Activated CD4-positive, alpha-beta T cell treated with anti-CD3 and anti-CD28 coated beads for 36 hours (primary cell): ENCODE measurements at regions of chr16 and their contacts with region 1.

Region 1: GRCh38 chr16:55828680-55829079 is 4.2 kb downstream of the CES1 start:
- DNase-seq: no peak
- ATAC-seq: no peak
- H3K4me3 Mint-ChIP-seq: no peak overlapping the region
- H3K27ac Mint-ChIP-seq: no peak overlapping the region
- H3K4me1 Mint-ChIP-seq: no peaks in the 10 kb centered on the region
- H3K27me3 Mint-ChIP-seq: peaks cover 8% of the 10 kb centered on the region

Region 2: GRCh38 chr16:55418585-55418984 is 410.1 kb before region 1 on chr16:
- CTCF ChIA-PET with region 1: no interaction called
- POLR2A ChIA-PET with region 1: no interaction called
- intact Hi-C with region 1: no loop called
- DNase-seq: no peak
- ATAC-seq: no peak
- H3K4me3 Mint-ChIP-seq: no peak overlapping the region
- H3K27ac Mint-ChIP-seq: no peak overlapping the region
- H3K4me1 Mint-ChIP-seq: peaks cover 5% of the 10 kb centered on the region
- H3K27me3 Mint-ChIP-seq: peaks cover 22% of the 10 kb centered on the region

Region 3: DNA sequence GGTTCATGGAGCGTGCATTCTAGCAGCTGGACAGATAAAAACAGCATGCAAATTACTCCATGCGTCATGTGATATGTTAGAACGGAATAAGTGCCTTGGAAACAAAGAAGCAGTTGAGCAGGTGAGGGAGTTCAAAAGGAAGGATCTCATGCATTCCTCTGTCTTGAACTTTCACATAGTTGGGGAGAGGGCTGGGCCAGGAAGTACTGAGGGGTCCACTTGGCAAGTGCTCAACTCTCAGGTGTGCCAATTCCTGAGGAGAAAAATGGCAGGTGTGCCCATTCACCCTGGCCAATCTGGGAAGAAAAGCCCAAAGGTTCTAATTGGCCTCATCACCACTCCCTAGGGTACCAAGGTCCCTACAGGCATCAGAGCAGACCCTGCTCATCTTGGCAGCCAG is 63.5 kb before region 1 on chr16:
- CTCF ChIA-PET with region 1: no interaction called
- POLR2A ChIA-PET with region 1: no interaction called
- intact Hi-C with region 1: loop called in 1 of 2 experiments (anchors 1 kb)
- DNase-seq: no peak
- ATAC-seq: no peak
- H3K4me3 Mint-ChIP-seq: no peak overlapping the region
- H3K27ac Mint-ChIP-seq: no peak overlapping the region
- H3K4me1 Mint-ChIP-seq: no peaks in the 10 kb centered on the region
- H3K27me3 Mint-ChIP-seq: peaks cover 12% of the 10 kb centered on the region

Region 4: DNA sequence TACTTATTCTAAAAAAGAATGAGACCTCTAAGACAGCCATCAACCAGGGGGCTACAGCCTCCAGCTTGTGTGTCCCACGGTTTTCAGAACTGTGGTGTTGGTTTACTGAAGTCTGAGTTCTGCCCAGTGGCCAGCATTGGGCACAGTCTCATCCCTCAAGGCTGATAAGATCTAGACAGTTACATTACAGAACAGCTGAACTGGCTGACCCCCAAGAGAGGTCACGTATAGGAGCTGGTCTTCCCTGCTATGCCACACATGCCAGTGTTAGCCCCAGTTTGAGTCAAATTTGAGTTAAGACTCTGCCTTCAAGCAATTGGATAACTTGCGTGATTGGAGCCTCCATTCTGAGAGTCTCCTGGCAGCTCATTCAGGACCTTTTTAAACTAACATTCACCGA is 886.4 kb after region 1 on chr16:
- CTCF ChIA-PET with region 1: no interaction called
- POLR2A ChIA-PET with region 1: no interaction called
- intact Hi-C with region 1: no loop called
- DNase-seq: no peak
- ATAC-seq: no peak
- H3K4me3 Mint-ChIP-seq: no peak overlapping the region
- H3K27ac Mint-ChIP-seq: no peak overlapping the region
- H3K4me1 Mint-ChIP-seq: no peaks in the 10 kb centered on the region
- H3K27me3 Mint-ChIP-seq: no peaks in the 10 kb centered on the region